ENCODE measurements at regions of chr2 and their contacts with region 1.

Region 1: DNA sequence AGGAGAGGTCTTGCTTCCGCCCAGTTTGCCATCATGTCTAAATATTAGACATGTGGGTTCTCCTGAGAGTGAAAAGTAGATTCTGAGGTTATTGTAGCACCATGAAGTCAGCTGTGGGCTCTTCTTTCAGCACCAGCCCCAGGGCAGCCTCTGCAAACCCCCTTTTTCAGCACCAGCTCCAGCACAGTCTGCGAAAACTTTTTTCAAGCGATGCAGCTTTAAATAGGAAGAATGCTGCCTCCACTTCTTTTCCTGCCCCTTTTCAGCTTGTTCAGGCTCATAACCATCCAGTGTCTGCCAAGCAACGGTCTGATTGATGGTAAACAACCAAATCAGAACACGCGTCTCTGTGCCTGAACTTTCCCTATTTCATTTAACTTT is at the start of gene COL5A2:
- DNase-seq: peak; percentile 91
- ATAC-seq: peak; percentile 79
- H3K4me3 ChIP-seq: peak within 1 kb of the TSS; percentile 96
- H3K27ac ChIP-seq: peak within 1 kb of the TSS; percentile 87
- H3K4me1 ChIP-seq: peaks cover 2% of the 10 kb centered on the region; the same call in 1 of the 2 replicates
- H3K27me3 ChIP-seq: no peaks in the 10 kb centered on the region
- CTCF ChIP-seq: no peak
- POLR2A ChIP-seq: peak; percentile 80
- RAD21 ChIP-seq: peak; percentile 41
- total RNA-seq, gene COL5A2: 235 and 257 TPM in 2 replicates

Region 2: DNA sequence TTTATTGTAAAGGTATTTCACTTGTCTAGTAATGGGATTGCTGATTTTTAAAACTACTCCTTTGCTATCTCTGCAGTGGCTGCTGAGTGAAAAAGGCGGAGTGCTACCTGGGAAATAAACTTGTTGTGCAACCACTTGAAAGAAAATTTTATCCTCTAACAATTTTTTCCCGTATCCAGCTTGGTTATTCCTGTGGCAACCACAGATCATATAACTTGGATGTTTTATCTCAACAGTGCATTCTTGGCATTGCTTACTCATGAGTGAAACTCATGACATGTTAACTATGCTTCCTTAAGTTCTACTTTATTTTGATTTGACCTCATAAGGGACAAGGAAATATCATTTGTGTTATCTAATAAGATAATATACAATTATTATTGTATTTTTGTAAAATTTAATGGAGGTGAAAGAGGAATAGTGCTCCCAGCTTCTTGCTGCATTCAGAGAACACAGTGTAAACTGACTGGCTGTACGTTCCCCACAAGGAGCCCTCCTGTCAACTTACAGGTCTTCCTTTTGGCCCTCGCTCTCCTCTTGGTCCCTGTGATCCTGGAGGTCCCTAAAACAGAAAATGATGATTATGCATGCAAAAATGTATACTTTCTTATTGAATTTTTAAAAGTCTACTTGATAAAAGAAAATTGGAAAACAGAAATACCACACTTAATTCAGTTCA is 82.7 kb before region 1 on chr2:
- CTCF ChIA-PET with region 1: no interaction called
- POLR2A ChIA-PET with region 1: no interaction called
- dilution Hi-C with region 1: no loop called
- in situ Hi-C with region 1: no loop called
- intact Hi-C with region 1: loop called (anchors 2 kb)
- DNase-seq: peak; percentile 95
- ATAC-seq: peak; percentile 82
- H3K4me3 ChIP-seq: no peak overlapping the region
- H3K27ac ChIP-seq: peak overlapping the region; percentile 99
- H3K4me1 ChIP-seq: peaks cover 10% of the 10 kb centered on the region
- H3K27me3 ChIP-seq: no peaks in the 10 kb centered on the region
- CTCF ChIP-seq: no peak
- POLR2A ChIP-seq: no peak
- RAD21 ChIP-seq: no peak

Region 3: GRCh38 chr2:189204322-189204941 is 24.9 kb after region 1 on chr2:
- CTCF ChIA-PET with region 1: no interaction called
- POLR2A ChIA-PET with region 1: interaction called, 31 read pairs
- dilution Hi-C with region 1: no loop called
- in situ Hi-C with region 1: no loop called
- intact Hi-C with region 1: loop called (anchors 1 kb)
- DNase-seq: peak; percentile 67
- ATAC-seq: peak; percentile 83
- H3K4me3 ChIP-seq: no peak overlapping the region
- H3K27ac ChIP-seq: peak overlapping the region; percentile 84; the same call in 1 of the 2 replicates
- H3K4me1 ChIP-seq: peaks cover 16% of the 10 kb centered on the region
- H3K27me3 ChIP-seq: no peaks in the 10 kb centered on the region
- CTCF ChIP-seq: no peak
- POLR2A ChIP-seq: no peak
- RAD21 ChIP-seq: no peak

Region 4: GRCh38 chr2:189287982-189288521 is 108.5 kb after region 1 on chr2:
- CTCF ChIA-PET with region 1: interaction called, 4 read pairs
- POLR2A ChIA-PET with region 1: interaction called, 7 read pairs
- dilution Hi-C with region 1: no loop called
- in situ Hi-C with region 1: loop called (anchors 10 kb)
- intact Hi-C with region 1: loop called (anchors 1 kb)
- DNase-seq: peak; percentile 91
- ATAC-seq: peak; percentile 75
- H3K4me3 ChIP-seq: no peak overlapping the region
- H3K27ac ChIP-seq: peak overlapping the region; percentile 69; the same call in 1 of the 2 replicates
- H3K4me1 ChIP-seq: peaks cover 16% of the 10 kb centered on the region
- H3K27me3 ChIP-seq: no peaks in the 10 kb centered on the region
- CTCF ChIP-seq: peak; percentile 69
- POLR2A ChIP-seq: no peak
- RAD21 ChIP-seq: peak; percentile 81

Measured in IMR-90 (cell line).